Posterior cingulate gyrus (tissue), 11 donors: ENCODE measurements at regions of chr15 and their contacts with region 1.

Region 1: DNA sequence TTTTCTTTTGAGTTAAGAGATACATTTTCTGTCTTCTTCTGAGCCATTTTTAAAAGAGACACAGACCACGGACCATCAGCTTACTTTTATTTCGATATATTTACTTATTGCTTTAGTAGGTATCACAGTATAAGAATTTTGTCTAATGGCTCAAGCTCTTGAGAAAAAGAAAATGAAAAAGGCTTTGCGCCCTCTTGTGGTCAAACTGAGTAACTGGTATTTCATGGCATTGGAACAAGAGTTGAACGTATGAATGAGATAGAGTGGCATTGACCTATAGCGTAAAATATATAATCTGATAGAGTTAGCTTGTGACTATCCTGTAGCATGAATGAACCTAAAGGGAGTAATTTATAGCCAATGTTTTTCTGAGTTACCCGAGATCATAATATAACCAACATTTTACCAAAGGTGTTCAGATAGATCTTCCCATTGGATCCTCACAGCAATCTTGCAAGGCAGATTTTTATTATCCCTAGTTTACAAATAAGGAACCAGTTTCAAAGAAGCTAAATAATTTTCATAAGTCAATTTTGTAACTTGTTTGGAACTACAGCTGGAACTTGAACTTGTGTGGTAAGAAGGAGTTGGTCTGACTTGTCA is 154.6 kb downstream of the POLR2M start:
- DNase-seq: peak in 1 of 10 donors; percentile 39

Region 2: DNA sequence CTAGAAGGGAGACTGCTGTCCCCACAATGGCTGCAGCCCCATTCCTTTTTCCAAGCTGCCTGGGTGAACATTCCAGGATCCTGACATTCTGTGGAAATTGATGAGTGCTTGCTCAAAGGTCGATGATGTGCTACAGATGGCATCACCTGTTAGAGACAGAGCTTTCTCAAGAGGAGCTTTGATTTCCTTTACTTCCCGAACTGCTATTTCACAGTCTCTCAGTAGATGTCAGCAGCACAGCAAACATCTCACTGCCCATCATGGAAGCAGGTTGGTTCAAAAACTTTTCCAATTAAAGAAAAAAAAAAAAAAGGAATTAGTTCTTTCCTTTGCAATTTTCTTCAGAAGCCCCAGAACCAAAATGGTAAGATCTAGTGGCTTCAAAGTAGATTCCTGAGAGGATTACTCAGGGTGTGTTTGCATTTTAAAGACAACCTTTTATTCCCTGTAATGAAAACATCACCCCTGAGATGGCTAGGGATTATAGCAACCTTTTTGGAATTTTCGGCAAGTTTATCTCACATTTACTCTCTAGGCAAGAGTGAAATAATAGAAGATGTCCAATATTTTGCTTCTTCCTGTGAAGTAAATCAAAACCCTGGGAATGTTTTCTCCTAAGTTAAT is 109.8 kb before region 1 on chr15:
- intact Hi-C with region 1: loop called (anchors 1 kb)
- DNase-seq: peak in 1 of 10 donors; percentile 30

Region 3: DNA sequence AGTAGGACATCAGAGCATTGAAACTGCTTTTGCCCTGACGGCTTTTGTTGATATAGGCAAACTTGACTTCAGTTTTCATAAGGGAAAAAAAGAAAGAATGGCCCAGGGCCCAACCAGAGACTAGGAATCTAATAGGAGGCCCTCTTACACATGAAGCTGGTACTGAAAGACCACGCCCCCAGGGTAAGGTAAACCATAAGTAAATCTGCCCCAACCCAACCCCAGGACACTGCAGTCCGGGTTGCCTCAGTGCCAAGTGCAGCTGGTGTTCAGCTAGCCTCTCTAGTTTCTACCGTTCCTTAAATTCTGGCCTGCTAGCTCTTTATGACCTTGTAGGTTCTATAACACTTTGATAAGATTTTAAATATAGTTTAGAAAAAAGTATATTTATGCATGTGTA is 413.7 kb after region 1 on chr15:
- intact Hi-C with region 1: no loop called
- DNase-seq: no peak

Region 4: GRCh38 chr15:58498821-58499580 is 637.9 kb after region 1 on chr15:
- intact Hi-C with region 1: no loop called
- DNase-seq: peak in 1 of 10 donors; percentile 46